Heart left ventricle (tissue), 16 donors: ENCODE measurements at regions of chr2 and their contacts with region 1.

Region 1: GRCh38 chr2:100818606-100819369 is 1.2 kb upstream of the NPAS2 start:
- DNase-seq: peak; percentile 49 to 88 (median 76)
- ATAC-seq: peak; percentile 63 to 84 (median 78)
- H3K4me3 ChIP-seq: peak overlapping the region; percentile 70 to 95 (median 79)
- H3K27ac ChIP-seq: peak overlapping the region; percentile 76 to 100 (median 92)
- H3K4me1 ChIP-seq: peaks cover 0 to 69% (median 29%) of the 10 kb centered on the region in 12 donors
- H3K27me3 ChIP-seq: peaks cover 0 to 33% (median 0%) of the 10 kb centered on the region in 9 donors
- CTCF ChIP-seq: peak in 7 of 12 donors; percentile 11 to 48 (median 29)
- POLR2A ChIP-seq: peak in 1 of 2 donors; percentile 47

Region 2: GRCh38 chr2:99960790-99961189 is 858.0 kb before region 1 on chr2:
- intact Hi-C with region 1: no loop called
- DNase-seq: peak in 4 of 5 donors; percentile 58 to 81 (median 68)
- ATAC-seq: peak; percentile 97 to 99 (median 98)
- H3K4me3 ChIP-seq: no peak overlapping the region
- H3K27ac ChIP-seq: peak overlapping the region in 9 of 12 donors; percentile 47 to 76 (median 66)
- H3K4me1 ChIP-seq: peaks cover 0 to 21% (median 5%) of the 10 kb centered on the region in 12 donors
- H3K27me3 ChIP-seq: no peaks in the 10 kb centered on the region
- CTCF ChIP-seq: no peak
- POLR2A ChIP-seq: no peak

Region 3: DNA sequence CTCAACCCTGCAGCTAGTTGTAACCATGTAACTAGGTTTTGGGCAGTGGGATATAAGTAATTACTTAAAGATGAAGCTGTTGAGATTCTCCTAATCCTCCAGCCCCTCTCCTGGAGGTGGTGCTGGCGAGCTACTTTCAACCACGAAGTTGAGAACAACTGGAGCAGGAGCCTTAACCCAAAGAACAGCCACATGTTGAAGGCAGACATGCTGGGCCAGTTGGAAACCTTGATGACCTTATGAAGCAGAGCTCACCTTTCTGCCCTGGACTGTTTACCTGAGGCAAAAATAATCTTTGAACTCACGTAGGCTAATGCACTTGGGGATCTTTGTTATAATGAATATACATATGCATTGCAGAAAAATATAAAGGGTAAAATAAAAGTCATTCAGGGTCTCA is 88.4 kb before region 1 on chr2:
- intact Hi-C with region 1: loop called in 9 of 10 experiments (anchors 2 to 5 kb)
- DNase-seq: peak in 4 of 5 donors; percentile 44 to 78 (median 65)
- ATAC-seq: peak; percentile 79 to 84 (median 82)
- H3K4me3 ChIP-seq: no peak overlapping the region
- H3K27ac ChIP-seq: no peak overlapping the region
- H3K4me1 ChIP-seq: peaks cover 0 to 11% (median 3%) of the 10 kb centered on the region in 12 donors
- H3K27me3 ChIP-seq: no peaks in the 10 kb centered on the region
- CTCF ChIP-seq: peak; percentile 58 to 85 (median 70)
- POLR2A ChIP-seq: no peak

Region 4: GRCh38 chr2:100752628-100753333 is 66.0 kb before region 1 on chr2:
- intact Hi-C with region 1: loop called in 5 of 10 experiments (anchors 2 to 10 kb)
- DNase-seq: no peak
- ATAC-seq: peak; percentile 60 to 85 (median 82)
- H3K4me3 ChIP-seq: no peak overlapping the region
- H3K27ac ChIP-seq: peak overlapping the region in 4 of 12 donors; percentile 8 to 53 (median 26)
- H3K4me1 ChIP-seq: peaks cover 0 to 40% (median 14%) of the 10 kb centered on the region in 12 donors
- H3K27me3 ChIP-seq: no peaks in the 10 kb centered on the region
- CTCF ChIP-seq: no peak
- POLR2A ChIP-seq: no peak

Region 5: GRCh38 chr2:100767224-100767653 is 51.5 kb before region 1 on chr2:
- intact Hi-C with region 1: no loop called
- DNase-seq: no peak
- ATAC-seq: no peak
- H3K4me3 ChIP-seq: no peak overlapping the region
- H3K27ac ChIP-seq: peak overlapping the region in 1 of 12 donors; percentile 44
- H3K4me1 ChIP-seq: peaks cover 0 to 7% (median 0%) of the 10 kb centered on the region in 12 donors
- H3K27me3 ChIP-seq: peaks cover 0 to 2% (median 0%) of the 10 kb centered on the region in 9 donors
- CTCF ChIP-seq: no peak
- POLR2A ChIP-seq: no peak

Region 6: DNA sequence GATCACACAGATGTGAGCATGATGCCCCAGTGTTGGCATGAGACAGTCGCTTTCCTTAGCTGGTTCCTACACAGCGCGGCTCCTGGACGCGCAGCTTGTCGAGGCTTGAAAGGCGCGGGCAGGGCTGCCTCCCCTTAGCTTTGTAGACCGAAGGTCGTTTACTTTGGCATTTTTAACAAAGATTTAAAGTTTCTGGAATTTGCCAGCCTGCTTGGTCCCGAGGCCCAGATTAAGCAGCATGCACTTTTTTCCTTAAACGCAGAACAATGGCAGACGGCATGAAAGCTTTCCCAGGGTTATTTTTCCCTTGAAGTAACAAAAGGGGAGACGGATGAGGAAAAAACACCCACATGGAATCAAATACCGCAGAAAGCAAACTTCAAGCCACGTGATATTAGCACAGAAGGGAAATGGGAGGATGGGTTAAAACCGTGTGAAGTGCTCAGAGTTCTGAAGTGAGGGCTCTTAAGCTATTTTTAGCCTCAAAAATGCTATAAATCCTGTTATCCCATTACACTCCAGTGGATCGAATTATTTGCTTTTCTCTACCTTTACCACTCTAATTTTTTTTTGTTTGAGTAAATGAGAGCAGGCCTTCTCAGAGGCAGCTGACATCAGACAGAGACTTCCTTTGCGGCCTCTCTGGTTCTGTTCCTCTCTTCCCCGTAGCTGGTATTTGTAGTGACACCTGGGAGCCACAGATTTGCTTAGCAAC is 56.9 kb after region 1 on chr2:
- intact Hi-C with region 1: loop called in 2 of 10 experiments (anchors 5 to 10 kb)
- DNase-seq: no peak
- ATAC-seq: peak in 1 of 4 donors; percentile 26
- H3K4me3 ChIP-seq: no peak overlapping the region
- H3K27ac ChIP-seq: peak overlapping the region in 2 of 12 donors; percentile 40 to 41
- H3K4me1 ChIP-seq: peaks cover 0 to 35% (median 11%) of the 10 kb centered on the region in 12 donors
- H3K27me3 ChIP-seq: no peaks in the 10 kb centered on the region
- CTCF ChIP-seq: no peak
- POLR2A ChIP-seq: no peak

Region 7: GRCh38 chr2:100893392-100894089 is 74.8 kb after region 1 on chr2:
- intact Hi-C with region 1: loop called in 6 of 10 experiments (anchors 5 to 10 kb)
- DNase-seq: peak in 2 of 5 donors; percentile 43 to 79
- ATAC-seq: peak in 3 of 4 donors; percentile 63 to 76 (median 76)
- H3K4me3 ChIP-seq: no peak overlapping the region
- H3K27ac ChIP-seq: peak overlapping the region in 11 of 12 donors; percentile 2 to 85 (median 50)
- H3K4me1 ChIP-seq: peaks cover 8 to 70% (median 31%) of the 10 kb centered on the region in 12 donors
- H3K27me3 ChIP-seq: no peaks in the 10 kb centered on the region
- CTCF ChIP-seq: no peak
- POLR2A ChIP-seq: no peak

Region 8: DNA sequence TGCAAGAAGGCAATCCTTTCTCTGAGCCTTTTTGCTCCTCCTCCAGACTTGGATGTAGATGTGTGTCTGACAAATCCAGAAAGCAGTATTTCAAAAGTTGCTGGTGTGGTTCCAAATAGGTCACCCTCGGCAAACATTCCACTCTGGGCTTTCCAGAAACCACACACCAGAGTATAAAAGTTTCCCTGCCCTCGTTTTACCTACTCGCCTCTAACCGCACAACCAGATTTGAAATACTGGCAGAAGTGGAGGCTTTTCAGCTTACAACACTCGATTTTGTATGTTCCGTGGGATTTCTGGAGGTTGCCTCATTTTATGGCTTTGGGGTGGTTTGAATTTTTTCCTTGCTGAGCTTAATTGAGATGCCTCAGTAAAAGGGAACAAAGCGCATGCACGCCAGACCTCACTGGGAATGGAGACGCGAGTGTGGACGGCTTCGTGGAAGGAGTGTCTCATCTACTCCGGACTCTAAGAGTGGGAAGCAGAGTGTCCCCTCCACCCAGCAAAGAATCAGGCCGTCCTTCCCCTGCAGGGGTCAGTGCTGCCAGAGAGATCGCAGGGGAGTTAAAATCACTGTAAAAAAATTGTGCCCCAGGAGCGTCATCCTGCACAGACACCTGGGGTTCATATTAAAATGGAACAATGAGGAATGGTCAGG is 139.3 kb after region 1 on chr2:
- intact Hi-C with region 1: loop called in 1 of 10 experiments (anchors 2 kb)
- DNase-seq: peak in 3 of 5 donors; percentile 28 to 40 (median 31)
- ATAC-seq: peak; percentile 52 to 78 (median 70)
- H3K4me3 ChIP-seq: peak overlapping the region in 1 of 12 donors; percentile 16
- H3K27ac ChIP-seq: peak overlapping the region in 3 of 12 donors; percentile 18 to 49 (median 22)
- H3K4me1 ChIP-seq: peaks cover 0 to 38% (median 17%) of the 10 kb centered on the region in 12 donors
- H3K27me3 ChIP-seq: no peaks in the 10 kb centered on the region
- CTCF ChIP-seq: no peak
- POLR2A ChIP-seq: no peak